Naive thymus-derived CD4-positive, alpha-beta T cell (primary cell): ENCODE measurements at regions of chr1 and their contacts with region 1.

Region 1: DNA sequence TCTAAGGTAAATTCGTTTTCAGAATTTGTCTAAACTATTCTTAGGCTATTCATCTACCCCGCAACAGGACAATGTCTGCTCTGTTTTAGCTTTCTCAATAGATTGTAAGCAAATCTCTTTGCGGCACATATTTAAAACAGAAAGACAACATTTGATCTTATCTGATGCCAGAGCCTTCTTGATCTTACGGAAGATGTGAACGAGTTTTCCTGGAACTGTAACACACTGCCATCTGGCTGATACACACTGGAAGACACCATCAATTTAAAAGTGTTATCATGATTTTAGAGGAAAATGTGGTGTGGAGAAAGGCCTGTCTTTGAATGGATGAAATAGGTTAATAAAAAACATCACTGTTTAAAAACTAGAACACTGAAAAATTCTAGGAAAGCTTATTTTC is 36.1 kb downstream of the COA6 start:
- DNase-seq: peak in 7 of 9 donors; percentile 44 to 80 (median 72)
- ATAC-seq: peak; percentile 81
- H3K4me3 ChIP-seq: peak overlapping the region; percentile 35
- H3K4me3 Mint-ChIP-seq: peak overlapping the region; percentile 64 to 89 (median 76)
- H3K27ac ChIP-seq: peak overlapping the region; percentile 83
- H3K27ac Mint-ChIP-seq: peak overlapping the region; percentile 91 to 99 (median 97)
- H3K4me1 ChIP-seq: peaks cover 0 to 48% of the 10 kb centered on the region in 2 donors
- H3K4me1 Mint-ChIP-seq: peaks cover 23 to 55% (median 49%) of the 10 kb centered on the region in 7 donors
- H3K27me3 ChIP-seq: no peaks in the 10 kb centered on the region
- H3K27me3 Mint-ChIP-seq: no peaks in the 10 kb centered on the region

Region 2: GRCh38 chr1:234114648-234115307 is 294.6 kb before region 1 on chr1:
- CTCF ChIA-PET with region 1: no interaction called
- POLR2A ChIA-PET with region 1: no interaction called
- intact Hi-C with region 1: loop called in 1 of 2 experiments (anchors 1 kb)
- DNase-seq: peak in 6 of 9 donors; percentile 10 to 43 (median 26)
- ATAC-seq: peak; percentile 44
- H3K4me3 ChIP-seq: peak overlapping the region; percentile 18
- H3K4me3 Mint-ChIP-seq: peak overlapping the region in 8 of 10 donors; percentile 47 to 84 (median 61)
- H3K27ac ChIP-seq: no peak overlapping the region
- H3K27ac Mint-ChIP-seq: peak overlapping the region in 2 of 9 donors; percentile 19 to 46
- H3K4me1 ChIP-seq: no peaks in the 10 kb centered on the region
- H3K4me1 Mint-ChIP-seq: peaks cover 3 to 9% (median 8%) of the 10 kb centered on the region in 7 donors
- H3K27me3 ChIP-seq: no peaks in the 10 kb centered on the region
- H3K27me3 Mint-ChIP-seq: peaks cover 0 to 36% (median 24%) of the 10 kb centered on the region in 5 donors

Region 3: DNA sequence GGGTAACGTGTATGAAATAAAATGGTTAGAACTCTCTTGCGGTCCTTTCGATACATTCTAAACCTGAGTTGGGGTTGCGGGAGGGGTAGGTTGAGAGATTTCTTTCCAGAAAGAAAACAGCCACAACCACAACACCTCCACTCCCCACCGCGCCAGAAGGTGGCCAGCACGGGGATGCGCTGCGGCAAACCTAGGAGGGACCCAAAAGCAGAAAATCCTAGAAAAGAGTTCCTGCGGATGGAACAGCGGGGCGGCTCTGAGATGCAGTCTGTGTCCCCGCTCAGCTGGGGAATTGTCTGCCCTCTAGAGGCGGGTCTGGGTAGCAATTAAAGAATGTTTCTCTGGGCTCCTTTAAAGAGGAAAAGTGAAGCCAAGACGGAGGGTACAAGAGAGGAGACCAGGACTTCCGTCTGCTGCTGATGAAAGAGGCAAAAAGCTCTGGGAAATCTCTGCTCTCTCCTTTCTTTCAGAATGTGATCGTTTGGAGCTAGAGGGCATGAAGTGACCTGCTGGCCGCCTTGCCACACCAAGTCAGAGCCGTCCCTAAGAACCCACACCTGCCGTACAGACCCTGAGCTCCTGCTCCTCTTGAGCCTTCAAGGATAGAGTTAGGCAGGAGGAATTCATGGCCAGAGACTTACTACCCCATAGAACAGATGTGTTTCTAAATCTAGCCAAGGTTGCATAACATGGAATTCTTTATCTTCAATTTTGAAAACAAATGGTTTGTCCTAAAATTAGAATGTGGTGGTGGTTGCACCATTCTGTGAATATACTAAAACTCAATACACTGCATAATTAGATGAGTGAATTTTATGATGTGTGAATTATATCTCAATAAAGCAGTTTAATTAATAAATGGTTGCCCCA is 82.6 kb before region 1 on chr1:
- CTCF ChIA-PET with region 1: interaction called, 16 read pairs
- POLR2A ChIA-PET with region 1: interaction called, 3 read pairs
- intact Hi-C with region 1: loop called (anchors 1 kb)
- DNase-seq: peak; percentile 32 to 79 (median 67)
- ATAC-seq: peak; percentile 92
- H3K4me3 ChIP-seq: peak overlapping the region; percentile 64
- H3K4me3 Mint-ChIP-seq: peak overlapping the region; percentile 76 to 94 (median 90)
- H3K27ac ChIP-seq: peak overlapping the region; percentile 67
- H3K27ac Mint-ChIP-seq: peak overlapping the region; percentile 41 to 99 (median 85)
- H3K4me1 ChIP-seq: peaks cover 0 to 4% of the 10 kb centered on the region in 2 donors
- H3K4me1 Mint-ChIP-seq: peaks cover 23 to 36% (median 30%) of the 10 kb centered on the region in 7 donors
- H3K27me3 ChIP-seq: no peaks in the 10 kb centered on the region
- H3K27me3 Mint-ChIP-seq: peaks cover 4 to 23% (median 12%) of the 10 kb centered on the region in 5 donors

Region 4: DNA sequence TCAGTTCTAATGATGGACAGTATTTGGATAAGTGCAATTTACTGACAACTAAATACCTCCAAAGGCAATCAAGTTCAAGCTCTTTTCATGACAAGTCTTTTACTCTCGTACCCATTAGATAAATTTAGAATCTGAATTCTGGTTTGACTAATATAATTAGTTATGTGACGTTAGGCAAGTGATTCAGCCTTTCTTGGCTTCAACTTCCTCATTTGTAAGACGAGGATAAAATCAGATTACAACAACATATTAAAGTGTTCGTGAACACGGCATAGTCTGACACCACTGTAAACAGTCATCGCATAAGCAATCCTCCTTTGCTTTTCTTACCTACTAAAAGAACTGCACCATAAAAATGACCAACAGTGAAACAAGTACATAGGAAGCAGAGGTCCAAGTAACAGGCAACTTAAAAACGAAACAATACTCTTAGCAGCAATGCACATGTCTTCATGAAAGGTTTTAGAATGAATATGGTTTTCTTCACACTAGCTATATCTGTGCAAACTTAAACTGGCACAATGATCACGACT is 10.4 kb before region 1 on chr1:
- CTCF ChIA-PET with region 1: interaction called, 46 read pairs
- POLR2A ChIA-PET with region 1: interaction called, 69 read pairs
- intact Hi-C with region 1: loop called (anchors 1 kb)
- DNase-seq: no peak
- ATAC-seq: peak; percentile 68
- H3K4me3 ChIP-seq: peak overlapping the region; percentile 2
- H3K4me3 Mint-ChIP-seq: peak overlapping the region; percentile 30 to 89 (median 80)
- H3K27ac ChIP-seq: peak overlapping the region; percentile 61
- H3K27ac Mint-ChIP-seq: peak overlapping the region; percentile 86 to 97 (median 92)
- H3K4me1 ChIP-seq: peaks cover 11 to 25% of the 10 kb centered on the region in 2 donors
- H3K4me1 Mint-ChIP-seq: peaks cover 41 to 79% (median 63%) of the 10 kb centered on the region in 7 donors
- H3K27me3 ChIP-seq: no peaks in the 10 kb centered on the region
- H3K27me3 Mint-ChIP-seq: no peaks in the 10 kb centered on the region

Region 5: GRCh38 chr1:235160957-235161684 is 751.8 kb after region 1 on chr1 and contains the start of gene RBM34:
- CTCF ChIA-PET with region 1: no interaction called
- POLR2A ChIA-PET with region 1: interaction called, 4 read pairs
- intact Hi-C with region 1: loop called in 1 of 2 experiments (anchors 1 kb)
- DNase-seq: peak; percentile 87 to 95 (median 91)
- ATAC-seq: peak; percentile 96
- H3K4me3 ChIP-seq: peak within 1 kb of the TSS; percentile 92
- H3K4me3 Mint-ChIP-seq: peak within 1 kb of the TSS in 8 of 10 donors; percentile 96 to 100 (median 98)
- H3K27ac ChIP-seq: peak within 1 kb of the TSS; percentile 86
- H3K27ac Mint-ChIP-seq: peak within 1 kb of the TSS; percentile 97 to 100 (median 99)
- H3K4me1 ChIP-seq: peaks cover 30 to 33% of the 10 kb centered on the region in 2 donors
- H3K4me1 Mint-ChIP-seq: peaks cover 8 to 30% (median 17%) of the 10 kb centered on the region in 7 donors
- H3K27me3 ChIP-seq: no peaks in the 10 kb centered on the region
- H3K27me3 Mint-ChIP-seq: no peaks in the 10 kb centered on the region
- total RNA-seq, gene RBM34: 105 to 171 (median 137) TPM